Right lobe of liver (tissue), 6 donors: ENCODE measurements at regions of chr19 and their contacts with region 1.

Region 1: GRCh38 chr19:4851551-4852290 is 15.7 kb downstream of the PLIN3 start:
- DNase-seq: peak; percentile 64 to 77 (median 77)
- ATAC-seq: peak; percentile 83 to 89 (median 86)
- H3K4me3 ChIP-seq: no peak overlapping the region
- H3K27ac ChIP-seq: no peak overlapping the region
- H3K4me1 ChIP-seq: no peaks in the 10 kb centered on the region
- H3K27me3 ChIP-seq: no peaks in the 10 kb centered on the region
- CTCF ChIP-seq: peak; percentile 77 to 92 (median 86)
- POLR2A ChIP-seq: no peak

Region 2: DNA sequence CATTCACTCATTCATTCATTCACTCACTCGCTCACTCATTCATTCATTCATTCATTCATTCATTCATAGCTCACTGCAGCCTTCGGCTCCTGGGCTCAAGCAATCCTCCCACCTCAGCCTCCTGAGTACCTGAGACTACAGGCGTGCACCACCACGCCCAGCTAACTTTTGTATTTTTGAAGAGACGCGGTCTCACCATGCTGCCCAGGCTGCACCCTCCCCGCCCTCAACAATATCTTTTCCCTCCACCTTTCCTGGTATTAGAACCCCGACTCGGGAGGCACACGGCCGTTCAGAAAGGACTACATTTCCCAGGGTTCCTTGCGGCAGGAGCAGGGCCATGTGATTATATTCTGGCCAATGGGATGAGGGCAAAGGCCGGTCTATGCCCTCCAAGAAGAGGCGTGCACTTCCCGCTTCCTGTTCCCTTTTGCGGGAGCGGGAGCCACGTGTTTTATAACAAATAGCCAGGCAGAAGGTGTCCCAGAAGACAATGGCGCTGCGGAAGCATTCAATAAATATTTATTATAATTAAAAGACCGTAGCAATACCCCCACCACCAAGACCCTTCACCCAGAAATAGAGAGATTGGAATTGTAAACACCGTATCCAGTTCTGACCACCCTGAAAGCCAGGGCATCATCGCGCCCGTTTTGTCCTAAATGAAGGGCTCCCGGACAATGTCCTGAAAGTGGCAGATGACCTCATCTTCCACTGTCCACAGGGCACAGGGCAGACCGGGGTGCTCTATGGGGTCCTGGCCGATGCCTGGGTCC is 36.1 kb before region 1 on chr19:
- intact Hi-C with region 1: loop called in 1 of 2 experiments (anchors 5 kb)
- DNase-seq: peak; percentile 86 to 92 (median 91)
- ATAC-seq: peak; percentile 82 to 96 (median 91)
- H3K4me3 ChIP-seq: peak overlapping the region in 1 of 3 donors; percentile 11
- H3K27ac ChIP-seq: no peak overlapping the region
- H3K4me1 ChIP-seq: peaks cover 0 to 5% (median 2%) of the 10 kb centered on the region in 4 donors
- H3K27me3 ChIP-seq: no peaks in the 10 kb centered on the region
- CTCF ChIP-seq: no peak
- POLR2A ChIP-seq: no peak